Heart right ventricle (tissue), 16 donors: ENCODE measurements at regions of chr3 and their contacts with region 1.

Region 1: GRCh38 chr3:11643605-11644087 is at the start of gene VGLL4:
- DNase-seq: peak; percentile 89
- ATAC-seq: peak; percentile 87 to 93 (median 90)
- H3K4me3 ChIP-seq: peak within 1 kb of the TSS; percentile 55 to 86 (median 76)
- H3K27ac ChIP-seq: peak within 1 kb of the TSS; percentile 88 to 98 (median 96)
- H3K4me1 ChIP-seq: peaks cover 18 to 39% (median 36%) of the 10 kb centered on the region in 9 donors
- H3K27me3 ChIP-seq: no peaks in the 10 kb centered on the region
- CTCF ChIP-seq: peak in 4 of 9 donors; percentile 22 to 42 (median 36)
- total RNA-seq, gene VGLL4: 20.8 to 46.1 (median 30.3) TPM

Region 2: GRCh38 chr3:11392014-11392859 is 251.4 kb before region 1 on chr3:
- intact Hi-C with region 1: loop called in 1 of 10 experiments (anchors 5 kb)
- DNase-seq: no peak
- ATAC-seq: no peak
- H3K4me3 ChIP-seq: no peak overlapping the region
- H3K27ac ChIP-seq: peak overlapping the region in 3 of 10 donors; percentile 0 to 50 (median 27)
- H3K4me1 ChIP-seq: peaks cover 12 to 33% (median 28%) of the 10 kb centered on the region in 9 donors
- H3K27me3 ChIP-seq: no peaks in the 10 kb centered on the region
- CTCF ChIP-seq: no peak

Region 3: GRCh38 chr3:11509173-11510000 is 134.3 kb before region 1 on chr3:
- intact Hi-C with region 1: loop called in 1 of 10 experiments (anchors 1 kb)
- DNase-seq: peak; percentile 68 to 71
- ATAC-seq: peak; percentile 88 to 96 (median 94)
- H3K4me3 ChIP-seq: peak overlapping the region in 1 of 10 donors; percentile 4
- H3K27ac ChIP-seq: peak overlapping the region; percentile 65 to 87 (median 75)
- H3K4me1 ChIP-seq: peaks cover 16 to 49% (median 44%) of the 10 kb centered on the region in 9 donors
- H3K27me3 ChIP-seq: no peaks in the 10 kb centered on the region
- CTCF ChIP-seq: peak in 4 of 9 donors; percentile 12 to 42 (median 38)

Region 4: DNA sequence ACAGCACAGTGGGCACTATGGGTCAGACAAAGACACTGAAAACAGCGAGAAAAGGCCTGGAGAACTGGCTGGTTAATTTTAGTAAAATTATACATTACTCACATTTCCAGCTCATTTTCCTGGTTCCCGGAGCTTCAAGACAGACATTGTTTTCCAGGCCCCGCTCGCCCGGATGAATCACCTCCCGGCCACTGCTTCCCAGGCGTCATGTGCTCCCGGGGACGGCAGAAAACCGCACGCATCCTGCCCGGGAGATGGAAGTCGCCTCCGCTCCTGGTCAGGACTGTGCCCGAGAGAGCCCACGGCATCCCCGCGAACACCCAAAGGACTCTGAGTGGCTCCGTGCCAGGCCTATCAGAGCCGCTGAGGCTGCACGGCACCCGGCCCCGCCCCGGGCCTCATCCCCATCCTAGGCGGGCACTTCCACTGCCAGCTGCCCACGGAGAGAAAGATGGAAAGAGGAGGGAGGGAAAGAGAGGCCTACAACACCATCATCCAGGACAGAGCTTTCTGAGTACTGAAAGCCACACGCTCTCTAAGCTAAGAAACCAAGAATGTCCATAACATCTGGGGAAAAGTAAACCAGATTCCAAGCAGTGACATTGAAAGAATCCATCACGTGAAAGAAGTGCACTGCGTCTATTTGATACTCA is 75.0 kb before region 1 on chr3:
- intact Hi-C with region 1: loop called in 6 of 10 experiments (anchors 5 to 10 kb)
- DNase-seq: peak; percentile 68 to 83
- ATAC-seq: peak; percentile 66 to 83 (median 76)
- H3K4me3 ChIP-seq: peak overlapping the region in 8 of 10 donors; percentile 3 to 40 (median 27)
- H3K27ac ChIP-seq: peak overlapping the region; percentile 41 to 96 (median 84)
- H3K4me1 ChIP-seq: peaks cover 32 to 84% (median 63%) of the 10 kb centered on the region in 9 donors
- H3K27me3 ChIP-seq: no peaks in the 10 kb centered on the region
- CTCF ChIP-seq: no peak

Region 5: DNA sequence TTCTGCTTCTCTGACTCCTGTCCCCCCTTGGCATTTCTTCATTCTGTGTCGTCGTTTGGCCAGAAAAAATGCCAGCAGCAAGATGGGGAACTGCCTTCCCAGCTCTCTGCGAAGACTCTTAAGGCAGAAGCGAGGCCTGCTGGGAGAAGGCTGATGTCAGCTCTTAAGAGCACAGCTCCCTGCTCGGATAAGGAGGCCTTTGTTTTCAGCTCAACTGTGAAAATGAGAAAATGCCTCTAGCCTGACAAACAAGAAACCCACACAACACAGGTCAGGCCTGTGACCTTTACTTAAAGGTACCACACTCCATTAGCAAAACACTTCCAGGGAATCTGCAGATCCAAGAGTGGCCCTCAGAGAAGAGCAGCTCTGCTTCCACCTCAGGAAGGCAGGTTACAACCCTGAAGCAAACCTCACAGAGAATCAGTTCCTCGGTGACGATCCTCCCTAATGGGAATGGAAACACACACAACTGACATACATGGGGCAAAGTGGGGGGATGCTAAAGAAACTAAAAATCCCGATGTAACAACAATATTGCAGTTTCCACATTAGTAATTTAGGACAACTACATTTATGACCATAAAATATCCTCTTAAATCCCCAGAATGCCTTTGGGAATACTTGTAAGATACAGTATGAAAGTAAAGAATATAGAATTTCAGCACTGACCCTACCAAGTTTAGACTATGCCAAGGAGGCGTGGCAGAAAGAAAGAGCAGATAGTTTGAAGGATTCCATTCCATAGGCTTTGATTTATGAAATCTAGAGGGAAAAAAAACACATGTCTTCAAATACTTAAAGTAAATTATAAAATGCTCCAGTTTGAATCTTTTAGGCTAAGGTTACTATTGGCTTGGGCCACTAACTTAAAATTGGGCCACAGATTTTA is 52.0 kb before region 1 on chr3:
- intact Hi-C with region 1: loop called in 3 of 10 experiments (anchors 2 to 10 kb)
- DNase-seq: peak; percentile 52 to 65
- ATAC-seq: peak; percentile 75 to 89 (median 78)
- H3K4me3 ChIP-seq: peak overlapping the region in 2 of 10 donors; percentile 8 to 22
- H3K27ac ChIP-seq: peak overlapping the region; percentile 64 to 86 (median 79)
- H3K4me1 ChIP-seq: peaks cover 34 to 88% (median 79%) of the 10 kb centered on the region in 9 donors
- H3K27me3 ChIP-seq: no peaks in the 10 kb centered on the region
- CTCF ChIP-seq: no peak